Left ventricle myocardium inferior (tissue), 1 donor: ENCODE measurements at regions of chr7 and their contacts with region 1.

Region 1: DNA sequence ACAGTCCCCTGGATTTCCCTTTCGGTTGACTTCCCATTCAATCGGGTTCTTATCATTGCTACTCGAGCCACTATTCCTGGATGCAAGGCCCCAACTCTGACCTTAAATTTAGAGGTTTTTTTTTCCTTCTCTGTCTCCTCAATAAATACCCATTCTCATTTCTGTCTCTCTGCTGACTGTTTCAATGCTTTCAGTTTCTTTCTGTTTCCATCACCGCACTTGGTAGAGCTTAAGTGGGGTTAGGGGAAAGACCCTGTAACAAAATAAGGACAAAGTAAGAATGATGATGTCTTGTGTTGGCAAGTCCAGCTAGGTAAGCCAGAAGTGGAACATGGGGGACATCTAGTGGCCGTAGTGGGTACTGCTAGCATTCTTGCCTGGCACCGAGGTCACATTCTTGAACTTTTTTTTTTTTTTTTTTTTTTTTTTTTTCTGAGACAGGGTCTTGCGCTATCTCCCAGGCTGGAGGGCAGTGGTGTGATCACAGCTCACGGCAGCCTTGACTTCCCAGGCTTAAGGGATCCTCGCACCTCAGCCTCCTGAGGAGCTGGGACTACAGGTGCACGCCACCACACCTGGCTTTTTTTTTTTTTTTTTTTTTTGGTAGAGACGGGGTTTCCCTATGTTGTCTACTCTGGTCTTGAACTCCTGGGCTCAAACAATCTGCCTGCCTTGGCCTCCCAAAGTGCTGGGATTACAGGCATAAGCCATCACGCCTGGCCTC is 40.3 kb downstream of the ZC3HC1 start:
- DNase-seq: peak; percentile 77
- H3K4me3 ChIP-seq: no peak overlapping the region
- H3K27ac ChIP-seq: no peak overlapping the region
- H3K4me1 ChIP-seq: peaks cover 12% of the 10 kb centered on the region
- H3K27me3 ChIP-seq: no peaks in the 10 kb centered on the region
- CTCF ChIP-seq: peak; percentile 94

Region 2: GRCh38 chr7:129829750-129830631 is 180.9 kb before region 1 on chr7:
- intact Hi-C with region 1: loop called (anchors 10 kb)
- DNase-seq: peak; percentile 39
- H3K4me3 ChIP-seq: peak overlapping the region; percentile 50
- H3K27ac ChIP-seq: peak overlapping the region; percentile 75
- H3K4me1 ChIP-seq: peaks cover 72% of the 10 kb centered on the region
- H3K27me3 ChIP-seq: no peaks in the 10 kb centered on the region
- CTCF ChIP-seq: peak; percentile 88

Region 3: GRCh38 chr7:129845178-129845971 is 165.5 kb before region 1 on chr7:
- intact Hi-C with region 1: no loop called
- DNase-seq: no peak
- H3K4me3 ChIP-seq: no peak overlapping the region
- H3K27ac ChIP-seq: peak overlapping the region; percentile 44
- H3K4me1 ChIP-seq: peaks cover 86% of the 10 kb centered on the region
- H3K27me3 ChIP-seq: no peaks in the 10 kb centered on the region
- CTCF ChIP-seq: no peak